Aorta (tissue), 5 donors: ENCODE measurements at regions of chr7 and their contacts with region 1.

Region 1: DNA sequence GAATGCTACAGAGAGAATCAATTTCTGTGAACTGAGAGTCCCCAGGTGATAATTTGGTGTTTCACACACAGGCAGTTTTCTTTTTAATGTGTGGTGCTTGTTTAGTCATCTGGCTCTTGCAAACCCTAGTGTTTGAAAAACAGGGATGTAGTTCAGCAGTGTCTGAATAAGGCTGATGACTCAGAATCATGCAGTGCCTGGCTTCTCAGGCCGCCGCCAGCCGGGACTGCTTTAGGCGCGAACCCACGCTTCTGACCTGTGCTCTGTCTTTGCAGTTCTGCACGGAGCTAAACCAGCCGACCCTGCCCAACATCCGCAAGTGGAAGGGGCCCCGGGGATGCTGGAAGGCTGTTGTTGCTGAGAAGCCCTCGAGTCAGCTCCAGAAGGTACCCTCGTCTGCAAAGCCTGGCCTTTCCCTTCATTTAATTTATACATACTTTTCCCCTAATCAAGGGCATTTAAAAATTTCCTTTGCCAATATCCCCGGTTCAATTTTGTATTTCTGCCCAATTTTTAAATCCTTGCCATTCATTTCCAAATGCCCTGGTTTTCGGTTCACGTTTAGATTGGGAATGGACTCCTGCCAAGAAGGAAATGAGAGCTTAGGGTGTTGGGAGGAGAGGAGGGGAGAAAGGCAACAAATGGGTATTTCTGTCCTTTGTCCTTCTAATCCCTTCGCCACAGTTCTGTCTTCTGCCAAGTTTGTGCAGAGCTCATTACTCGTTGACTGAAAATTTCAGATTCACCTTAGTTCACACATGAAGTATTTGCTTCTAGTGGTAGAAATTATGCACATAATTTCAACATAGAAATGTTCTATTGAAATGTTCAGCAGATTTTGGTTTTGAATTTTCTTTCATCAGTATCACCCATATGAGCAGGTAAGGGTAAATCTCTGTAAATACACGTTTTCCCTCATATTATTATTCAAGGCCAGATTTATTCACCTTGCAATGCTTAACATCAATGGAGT is 108.5 kb upstream of the ANLN start:
- DNase-seq: peak; percentile 89
- ATAC-seq: peak; percentile 83
- H3K4me3 ChIP-seq: no peak overlapping the region
- H3K27ac ChIP-seq: peak overlapping the region in 1 of 2 donors; percentile 36
- H3K4me1 ChIP-seq: peaks cover 0 to 17% of the 10 kb centered on the region in 2 donors
- H3K27me3 ChIP-seq: no peaks in the 10 kb centered on the region

Region 2: GRCh38 chr7:36207451-36208291 is 73.5 kb before region 1 on chr7:
- intact Hi-C with region 1: loop called in 1 of 2 experiments (anchors 5 kb)
- DNase-seq: peak; percentile 79 to 84
- ATAC-seq: peak; percentile 72
- H3K4me3 ChIP-seq: no peak overlapping the region
- H3K27ac ChIP-seq: peak overlapping the region in 1 of 2 donors; percentile 64
- H3K4me1 ChIP-seq: peaks cover 2 to 13% of the 10 kb centered on the region in 2 donors
- H3K27me3 ChIP-seq: no peaks in the 10 kb centered on the region

Region 3: GRCh38 chr7:36232971-36233550 is 48.1 kb before region 1 on chr7:
- intact Hi-C with region 1: loop called in 1 of 2 experiments (anchors 1 kb)
- DNase-seq: no peak
- ATAC-seq: no peak
- H3K4me3 ChIP-seq: no peak overlapping the region
- H3K27ac ChIP-seq: peak overlapping the region in 1 of 2 donors; percentile 42
- H3K4me1 ChIP-seq: no peaks in the 10 kb centered on the region
- H3K27me3 ChIP-seq: no peaks in the 10 kb centered on the region